Activated CD8-positive, alpha-beta memory T cell treated with anti-CD3 and anti-CD28 coated beads, Interleukin-2, amount 10 ng/mL, durations not matched to agents 7 days and 5 days (primary cell): ENCODE measurements at regions of chr10 and their contacts with region 1.

Region 1: GRCh38 chr10:104254493-104255310 is at the start of gene GSTO1:
- DNase-seq: peak; percentile 71
- ATAC-seq: peak; percentile 86
- H3K4me3 Mint-ChIP-seq: peak within 1 kb of the TSS; percentile 98
- H3K27ac Mint-ChIP-seq: peak within 1 kb of the TSS; percentile 89
- H3K4me1 Mint-ChIP-seq: peaks cover 45% of the 10 kb centered on the region
- H3K27me3 Mint-ChIP-seq: peaks cover 17% of the 10 kb centered on the region
- total RNA-seq, gene GSTO1: 128 to 161 TPM

Region 2: GRCh38 chr10:104067525-104067924 is 187.2 kb before region 1 on chr10:
- CTCF ChIA-PET with region 1: no interaction called
- DNase-seq: no peak
- ATAC-seq: no peak
- H3K4me3 Mint-ChIP-seq: no peak overlapping the region
- H3K27ac Mint-ChIP-seq: no peak overlapping the region
- H3K4me1 Mint-ChIP-seq: no peaks in the 10 kb centered on the region
- H3K27me3 Mint-ChIP-seq: peaks cover 7% of the 10 kb centered on the region

Region 3: DNA sequence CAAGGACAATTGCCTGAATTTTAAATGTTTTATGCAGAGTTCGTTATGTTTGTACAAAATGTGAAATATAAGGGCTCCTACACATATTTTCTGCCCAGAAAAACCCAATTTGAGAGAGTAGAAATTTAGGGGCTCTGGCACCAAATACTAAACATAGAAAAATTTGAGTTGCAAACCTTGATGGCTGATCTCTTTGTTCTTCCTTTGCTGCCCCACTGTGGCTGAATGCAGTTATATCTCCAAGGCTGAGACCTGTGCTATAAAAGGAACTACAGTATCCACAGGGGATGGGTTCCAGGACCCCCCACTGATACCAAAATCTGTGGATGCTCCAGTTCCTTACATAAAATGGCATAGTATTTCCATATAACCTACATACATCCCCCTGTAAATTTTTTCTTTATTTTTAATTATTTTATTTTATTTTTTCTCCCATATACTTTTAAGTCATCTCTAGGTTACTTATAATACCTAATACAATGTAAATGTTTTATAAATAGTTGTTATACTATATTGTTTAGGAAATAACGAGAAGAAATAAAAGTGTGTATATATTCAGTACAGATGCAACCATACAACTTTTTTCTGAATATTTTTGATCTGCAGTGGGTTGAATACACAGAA is 45.0 kb before region 1 on chr10:
- CTCF ChIA-PET with region 1: no interaction called
- DNase-seq: peak; percentile 55
- ATAC-seq: peak; percentile 63
- H3K4me3 Mint-ChIP-seq: no peak overlapping the region
- H3K27ac Mint-ChIP-seq: no peak overlapping the region
- H3K4me1 Mint-ChIP-seq: no peaks in the 10 kb centered on the region
- H3K27me3 Mint-ChIP-seq: peaks cover 31% of the 10 kb centered on the region

Region 4: DNA sequence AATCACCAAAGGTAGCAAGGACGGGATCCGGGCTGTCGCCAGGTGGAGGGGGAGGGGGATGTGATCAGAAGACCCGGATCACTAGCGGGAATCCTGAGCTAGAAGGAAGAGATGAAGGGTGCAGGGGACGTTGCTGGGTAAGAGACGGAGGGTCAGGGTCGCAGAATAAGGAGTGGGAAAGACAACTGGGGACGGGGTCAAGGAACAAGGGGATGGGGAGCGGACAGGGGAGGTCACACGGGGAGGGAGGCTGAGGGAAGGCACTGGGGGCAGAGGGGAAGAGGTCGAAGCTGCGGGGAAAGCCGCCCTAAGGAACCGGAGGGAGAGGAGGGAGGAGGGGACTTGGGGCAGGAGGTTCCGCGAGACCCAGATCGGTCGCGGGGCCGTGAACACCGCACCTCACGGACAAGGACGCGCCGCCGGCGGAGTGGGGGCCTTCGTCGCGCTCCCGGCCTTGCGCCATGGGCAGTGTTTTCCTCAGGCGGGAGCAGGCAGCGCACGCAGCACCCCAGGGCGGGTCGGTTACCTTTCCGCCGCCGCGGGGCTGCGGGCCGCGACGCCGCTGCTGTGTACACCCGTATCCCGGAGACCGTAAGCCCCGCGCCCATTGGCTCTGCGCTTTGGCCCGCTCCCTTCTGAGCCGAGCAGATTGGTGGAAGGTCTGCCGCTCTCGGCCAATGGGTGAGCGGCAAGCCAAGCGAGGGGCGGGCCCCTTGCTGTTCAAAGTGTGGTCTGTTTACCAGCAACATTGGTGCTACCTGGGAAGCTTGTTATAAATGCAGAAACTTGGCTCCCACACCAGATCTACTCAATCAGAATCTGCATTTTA is 22.7 kb before region 1 on chr10 and contains the start of gene CFAP43:
- CTCF ChIA-PET with region 1: no interaction called
- DNase-seq: peak; percentile 99
- ATAC-seq: peak; percentile 100
- H3K4me3 Mint-ChIP-seq: peak within 1 kb of the TSS; percentile 85
- H3K27ac Mint-ChIP-seq: peak within 1 kb of the TSS; percentile 40
- H3K4me1 Mint-ChIP-seq: peaks cover 11% of the 10 kb centered on the region
- H3K27me3 Mint-ChIP-seq: peaks cover 29% of the 10 kb centered on the region
- total RNA-seq, gene CFAP43: not detected

Region 5: DNA sequence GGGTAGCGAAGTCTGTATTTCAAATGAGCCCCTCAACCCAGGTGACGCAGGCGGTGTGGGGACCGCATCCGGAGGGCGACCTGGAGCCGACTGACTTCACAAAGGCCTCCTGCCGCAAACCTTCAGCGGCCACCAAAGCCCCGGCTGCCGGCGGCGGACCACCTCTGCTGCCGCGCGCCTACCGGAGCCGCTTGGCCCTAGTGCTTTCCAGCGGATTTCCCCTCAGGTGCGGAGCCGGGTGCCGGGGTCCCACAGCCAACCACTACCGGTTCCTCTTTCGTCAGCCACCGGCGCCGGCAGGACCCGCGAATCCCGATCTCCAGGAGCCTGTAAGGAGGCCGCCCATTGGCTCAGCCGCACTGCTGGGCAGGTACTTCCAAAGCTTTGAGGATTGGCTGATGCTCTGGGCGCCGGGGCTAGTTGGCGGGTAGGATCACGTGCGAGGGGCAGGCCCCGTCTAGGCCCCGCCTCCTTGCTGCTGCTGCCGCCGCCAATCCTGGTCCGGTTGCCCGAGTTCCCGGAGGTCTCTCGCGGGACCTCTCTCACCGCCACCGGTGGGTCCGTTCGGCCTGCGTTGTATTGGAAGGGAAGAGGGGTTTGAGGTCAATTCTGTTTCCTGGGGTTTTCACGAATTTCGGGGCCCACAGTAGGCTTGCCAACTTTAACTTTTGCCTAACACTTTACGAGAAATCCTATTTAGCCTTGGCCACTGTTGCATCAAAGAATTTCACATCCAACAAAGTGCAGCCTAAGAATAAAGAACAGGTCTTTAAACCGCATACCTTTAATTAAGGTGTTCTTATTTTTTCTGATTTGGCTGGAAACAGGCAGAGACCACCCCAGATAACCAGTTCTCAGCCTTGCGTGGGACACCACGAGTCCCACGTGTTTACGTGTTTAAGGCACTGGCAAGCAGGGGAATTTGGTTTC is 14.3 kb after region 1 on chr10 and contains the start of gene GSTO2:
- CTCF ChIA-PET with region 1: interaction called, 10 read pairs
- DNase-seq: peak; percentile 100
- ATAC-seq: peak; percentile 97
- H3K4me3 Mint-ChIP-seq: peak within 1 kb of the TSS; percentile 91
- H3K27ac Mint-ChIP-seq: peak within 1 kb of the TSS; percentile 94
- H3K4me1 Mint-ChIP-seq: peaks cover 45% of the 10 kb centered on the region
- H3K27me3 Mint-ChIP-seq: peaks cover 4% of the 10 kb centered on the region
- total RNA-seq, gene GSTO2: 0.96 to 1.3 TPM

Region 6: GRCh38 chr10:104521901-104522694 is 267.4 kb after region 1 on chr10:
- CTCF ChIA-PET with region 1: no interaction called
- DNase-seq: no peak
- ATAC-seq: no peak
- H3K4me3 Mint-ChIP-seq: no peak overlapping the region
- H3K27ac Mint-ChIP-seq: no peak overlapping the region
- H3K4me1 Mint-ChIP-seq: no peaks in the 10 kb centered on the region
- H3K27me3 Mint-ChIP-seq: peaks cover 9% of the 10 kb centered on the region